ENCODE measurements at regions of chr3 and their contacts with region 1.

Region 1: DNA sequence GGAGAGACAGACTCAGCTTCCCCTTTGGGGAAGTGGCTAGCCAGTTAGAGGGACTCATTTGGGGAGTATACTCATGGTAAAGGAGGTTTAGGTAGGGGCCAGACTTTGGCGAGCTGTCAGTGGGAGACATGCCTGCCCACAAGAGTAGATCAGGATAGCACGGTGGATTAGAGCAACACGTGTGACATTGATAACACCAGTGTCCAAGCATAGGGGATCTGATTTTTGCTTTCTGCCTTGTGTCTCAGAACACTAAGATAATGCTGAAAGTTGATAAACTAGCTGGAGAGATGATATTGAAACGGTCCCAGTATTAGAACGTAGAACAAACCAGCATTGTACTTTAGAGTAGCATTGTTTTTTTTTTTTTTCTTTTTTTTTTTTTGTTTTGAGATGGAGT is 25.9 kb downstream of the MAP6D1 start:
- DNase-seq: no peak
- H3K4me3 ChIP-seq: no peak overlapping the region
- H3K27ac ChIP-seq: no peak overlapping the region
- H3K4me1 ChIP-seq: no peaks in the 10 kb centered on the region
- H3K27me3 ChIP-seq: no peaks in the 10 kb centered on the region
- CTCF ChIP-seq: no peak

Region 2: DNA sequence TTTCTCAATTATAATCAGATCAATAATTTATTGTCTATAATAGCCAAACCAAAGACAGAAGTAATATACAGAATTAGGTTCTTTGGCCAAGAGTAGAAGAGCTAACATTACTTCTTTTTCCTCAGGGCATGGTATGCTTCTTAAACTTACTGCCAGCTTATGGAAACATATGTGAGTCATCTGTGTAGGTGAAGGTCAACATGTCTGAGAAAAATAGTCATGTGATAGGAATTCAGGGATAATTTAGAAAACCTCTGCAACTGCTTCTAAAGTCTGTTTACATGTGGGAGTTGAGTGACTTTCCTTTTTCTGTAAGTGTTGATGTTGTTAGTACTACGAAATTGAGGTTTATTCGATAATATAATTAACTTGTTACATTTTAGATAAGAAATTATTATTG is 45.1 kb after region 1 on chr3:
- CTCF ChIA-PET with region 1: no interaction called
- POLR2A ChIA-PET with region 1: interaction called, 31 read pairs
- intact Hi-C with region 1: no loop called
- DNase-seq: peak in 1 of 2 experiments; percentile 64
- H3K4me3 ChIP-seq: no peak overlapping the region
- H3K27ac ChIP-seq: no peak overlapping the region
- H3K4me1 ChIP-seq: peaks cover 13% of the 10 kb centered on the region
- H3K27me3 ChIP-seq: no peaks in the 10 kb centered on the region
- CTCF ChIP-seq: no peak